ENCODE measurements at regions of chr2 and their contacts with region 1.

Region 1: GRCh38 chr2:102240640-102241370 is 54.0 kb downstream of the IL1RL2 start:
- DNase-seq: peak; percentile 92
- H3K4me3 Mint-ChIP-seq: peak overlapping the region; percentile 5
- H3K27ac Mint-ChIP-seq: peak overlapping the region; percentile 78
- H3K4me1 Mint-ChIP-seq: peaks cover 38% of the 10 kb centered on the region
- H3K27me3 Mint-ChIP-seq: no peaks in the 10 kb centered on the region

Region 2: GRCh38 chr2:101998896-101999789 is 241.7 kb before region 1 on chr2:
- CTCF ChIA-PET with region 1: interaction called, 148 read pairs
- POLR2A ChIA-PET with region 1: interaction called, 14 read pairs
- intact Hi-C with region 1: no loop called
- DNase-seq: peak; percentile 71
- H3K4me3 Mint-ChIP-seq: peak overlapping the region; percentile 66
- H3K27ac Mint-ChIP-seq: peak overlapping the region; percentile 93
- H3K4me1 Mint-ChIP-seq: peaks cover 36% of the 10 kb centered on the region
- H3K27me3 Mint-ChIP-seq: peaks cover 14% of the 10 kb centered on the region

Region 3: GRCh38 chr2:102033031-102033749 is 207.6 kb before region 1 on chr2:
- CTCF ChIA-PET with region 1: interaction called, 44 read pairs
- POLR2A ChIA-PET with region 1: no interaction called
- intact Hi-C with region 1: no loop called
- DNase-seq: peak; percentile 53
- H3K4me3 Mint-ChIP-seq: no peak overlapping the region
- H3K27ac Mint-ChIP-seq: peak overlapping the region; percentile 65
- H3K4me1 Mint-ChIP-seq: peaks cover 47% of the 10 kb centered on the region
- H3K27me3 Mint-ChIP-seq: no peaks in the 10 kb centered on the region

Region 4: GRCh38 chr2:102103992-102104871 is 136.6 kb before region 1 on chr2:
- CTCF ChIA-PET with region 1: interaction called, 12 read pairs
- POLR2A ChIA-PET with region 1: no interaction called
- intact Hi-C with region 1: no loop called
- DNase-seq: peak; percentile 92
- H3K4me3 Mint-ChIP-seq: peak overlapping the region; percentile 81
- H3K27ac Mint-ChIP-seq: peak overlapping the region; percentile 86
- H3K4me1 Mint-ChIP-seq: peaks cover 50% of the 10 kb centered on the region
- H3K27me3 Mint-ChIP-seq: peaks cover 12% of the 10 kb centered on the region

Region 5: DNA sequence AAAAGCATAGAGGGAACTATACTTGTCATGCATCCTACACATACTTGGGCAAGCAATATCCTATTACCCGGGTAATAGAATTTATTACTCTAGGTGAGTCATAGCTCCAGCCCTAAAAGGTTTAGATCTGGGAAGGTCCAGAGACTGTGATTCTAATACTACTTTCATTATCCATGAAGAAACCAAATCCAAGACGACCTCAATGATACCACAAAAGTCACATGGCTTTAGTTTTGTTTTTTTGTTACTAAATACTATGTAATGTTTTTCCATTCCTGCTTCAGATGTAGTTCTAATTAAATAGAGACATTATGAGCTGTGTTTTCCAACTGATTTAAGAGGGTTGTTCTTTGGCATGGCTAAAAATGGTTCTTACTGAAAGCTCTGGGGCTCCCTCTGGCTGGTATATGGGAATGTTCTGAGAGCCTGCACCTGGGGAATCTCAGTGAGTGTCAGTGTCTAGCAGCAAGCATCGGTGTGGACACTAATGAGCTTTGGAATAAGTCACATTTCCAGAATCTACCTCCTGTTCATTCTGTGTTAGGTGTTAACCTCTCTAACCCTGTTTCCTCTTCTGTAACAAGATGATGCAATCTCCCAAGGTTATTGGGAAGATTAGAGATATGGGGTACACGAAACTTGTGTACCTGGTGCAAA is 74.5 kb before region 1 on chr2:
- CTCF ChIA-PET with region 1: interaction called, 15 read pairs
- POLR2A ChIA-PET with region 1: no interaction called
- intact Hi-C with region 1: loop called (anchors 5 kb)
- DNase-seq: no peak
- H3K4me3 Mint-ChIP-seq: no peak overlapping the region
- H3K27ac Mint-ChIP-seq: no peak overlapping the region
- H3K4me1 Mint-ChIP-seq: peaks cover 5% of the 10 kb centered on the region
- H3K27me3 Mint-ChIP-seq: no peaks in the 10 kb centered on the region

Region 6: GRCh38 chr2:102355526-102356380 is 114.9 kb after region 1 on chr2 and contains the start of gene IL18R1:
- CTCF ChIA-PET with region 1: interaction called, 37 read pairs
- POLR2A ChIA-PET with region 1: interaction called, 5 read pairs
- intact Hi-C with region 1: no loop called
- DNase-seq: peak; percentile 81
- H3K4me3 Mint-ChIP-seq: peak within 1 kb of the TSS; percentile 97
- H3K27ac Mint-ChIP-seq: peak within 1 kb of the TSS; percentile 89
- H3K4me1 Mint-ChIP-seq: peaks cover 45% of the 10 kb centered on the region
- H3K27me3 Mint-ChIP-seq: no peaks in the 10 kb centered on the region
- total RNA-seq, gene IL18R1: 25.5 to 26.6 TPM

Region 7: GRCh38 chr2:102428573-102428972 is 187.8 kb after region 1 on chr2:
- CTCF ChIA-PET with region 1: no interaction called
- POLR2A ChIA-PET with region 1: no interaction called
- intact Hi-C with region 1: no loop called
- DNase-seq: no peak
- H3K4me3 Mint-ChIP-seq: no peak overlapping the region
- H3K27ac Mint-ChIP-seq: peak overlapping the region; percentile 61
- H3K4me1 Mint-ChIP-seq: peaks cover 54% of the 10 kb centered on the region
- H3K27me3 Mint-ChIP-seq: no peaks in the 10 kb centered on the region

Measured in activated CD4-positive, alpha-beta memory T cell treated with anti-CD3 and anti-CD28 coated beads for 36 hours (primary cell).